Activated CD4-positive, alpha-beta T cell treated with anti-CD3 and anti-CD28 coated beads for 36 hours (primary cell): ENCODE measurements at regions of chr11 and their contacts with region 1.

Region 1: GRCh38 chr11:47847892-47848635 is at the start of gene NUP160:
- DNase-seq: peak; percentile 94
- ATAC-seq: peak; percentile 88
- H3K4me3 Mint-ChIP-seq: peak within 1 kb of the TSS; percentile 90
- H3K27ac Mint-ChIP-seq: peak within 1 kb of the TSS; percentile 99
- H3K4me1 Mint-ChIP-seq: peaks cover 44% of the 10 kb centered on the region
- H3K27me3 Mint-ChIP-seq: no peaks in the 10 kb centered on the region
- total RNA-seq, gene NUP160: 67.1 to 84.5 TPM

Region 2: GRCh38 chr11:46845740-46846509 is 1002.1 kb before region 1 on chr11 and contains the start of gene CKAP5:
- CTCF ChIA-PET with region 1: no interaction called
- POLR2A ChIA-PET with region 1: no interaction called
- intact Hi-C with region 1: loop called in 1 of 2 experiments (anchors 1 kb)
- DNase-seq: peak; percentile 92
- ATAC-seq: peak; percentile 92
- H3K4me3 Mint-ChIP-seq: peak within 1 kb of the TSS; percentile 86
- H3K27ac Mint-ChIP-seq: peak within 1 kb of the TSS; percentile 94
- H3K4me1 Mint-ChIP-seq: peaks cover 30% of the 10 kb centered on the region
- H3K27me3 Mint-ChIP-seq: no peaks in the 10 kb centered on the region
- total RNA-seq, gene CKAP5: 166 to 183 TPM

Region 3: DNA sequence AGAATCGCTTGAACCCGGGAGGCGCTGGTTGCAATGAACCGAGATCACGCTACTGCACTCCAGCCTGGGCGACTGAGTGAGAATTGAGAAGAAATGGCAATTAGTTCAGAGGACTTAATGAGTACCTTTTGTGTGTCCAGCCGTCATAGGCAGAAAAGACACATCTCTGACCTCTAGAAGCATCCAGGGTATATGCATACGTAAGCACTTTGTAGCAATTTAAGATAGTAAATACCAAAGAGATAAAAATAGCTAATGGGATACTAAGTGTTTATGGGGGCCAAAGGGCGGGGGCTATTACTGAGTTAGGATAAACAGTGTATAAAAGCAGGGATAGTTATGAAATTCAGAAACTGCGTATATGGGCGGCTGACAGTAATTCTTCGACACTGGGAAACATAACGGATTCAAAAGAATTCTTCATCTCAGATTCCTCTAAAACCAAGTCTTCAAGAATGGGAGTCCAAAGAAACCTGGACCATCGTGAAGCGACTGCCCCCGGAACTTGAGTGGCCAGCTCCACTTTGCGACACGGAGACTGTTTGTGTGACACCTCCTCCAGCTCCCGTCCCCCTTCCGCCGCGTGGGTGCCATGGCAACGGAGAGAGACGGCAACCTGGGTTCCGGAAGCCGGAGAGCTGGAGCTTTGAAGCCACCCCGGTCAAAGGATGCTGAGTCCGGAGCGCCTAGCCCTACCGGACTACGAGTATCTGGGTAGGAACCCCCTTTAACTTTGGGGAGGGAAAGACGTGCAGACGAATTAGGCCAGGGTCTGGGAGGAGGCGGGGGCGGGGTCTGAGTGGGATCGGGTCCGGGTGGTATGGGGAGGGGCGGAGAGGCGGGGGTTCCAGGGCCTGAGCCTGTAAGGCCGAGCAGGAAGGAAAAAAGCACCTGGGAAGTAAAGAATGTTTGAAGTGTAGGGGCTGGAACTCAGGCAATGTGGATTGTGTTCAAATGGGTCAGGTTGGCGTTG is 911.6 kb before region 1 on chr11 and contains the start of gene CSTPP1:
- CTCF ChIA-PET with region 1: no interaction called
- POLR2A ChIA-PET with region 1: no interaction called
- intact Hi-C with region 1: loop called in 1 of 2 experiments (anchors 5 kb)
- DNase-seq: peak; percentile 97
- ATAC-seq: peak; percentile 96
- H3K4me3 Mint-ChIP-seq: peak within 1 kb of the TSS; percentile 86
- H3K27ac Mint-ChIP-seq: peak within 1 kb of the TSS; percentile 88
- H3K4me1 Mint-ChIP-seq: peaks cover 16% of the 10 kb centered on the region
- H3K27me3 Mint-ChIP-seq: peaks cover 5% of the 10 kb centered on the region
- total RNA-seq, gene CSTPP1: 17.9 to 18.6 TPM

Region 4: DNA sequence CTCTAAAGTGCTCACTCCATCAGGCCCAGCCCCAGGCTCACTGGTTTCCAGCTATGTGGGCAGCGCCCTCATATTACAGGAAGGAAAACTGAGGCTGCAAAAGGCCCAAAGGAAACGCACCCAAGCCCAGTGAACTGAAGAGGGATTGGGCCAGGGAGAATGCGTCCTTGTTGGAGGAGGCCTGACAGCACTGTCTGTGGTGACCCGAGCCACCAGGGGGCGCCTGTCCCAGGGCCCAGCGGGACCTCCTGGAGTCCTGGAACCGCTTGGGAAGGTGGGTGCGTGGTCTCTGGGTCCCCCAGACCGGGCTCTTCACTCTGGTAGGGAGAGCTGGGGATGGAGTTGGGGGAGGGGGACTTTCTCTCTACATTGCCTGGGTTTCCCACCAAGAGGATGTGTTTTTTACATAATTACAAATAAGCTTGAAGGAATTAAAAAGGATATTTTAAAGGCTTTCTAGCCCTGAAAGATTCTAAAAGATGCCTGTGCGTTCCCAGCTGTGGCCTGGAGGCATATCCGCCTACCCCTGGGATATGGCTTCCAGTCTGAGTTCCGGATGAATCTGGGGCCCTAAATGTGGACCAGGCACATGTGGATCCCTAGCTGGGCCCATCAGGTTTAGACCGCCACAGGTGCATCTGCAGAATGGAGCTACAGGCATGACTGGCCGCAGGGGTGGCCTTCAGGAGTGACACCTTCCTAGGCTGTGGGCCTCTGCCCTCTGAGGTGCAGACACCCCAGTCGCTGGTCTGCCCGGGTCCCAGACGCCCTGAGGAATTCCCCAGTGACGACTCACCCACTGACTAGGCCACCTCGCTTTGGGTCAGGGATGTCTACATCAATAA is 474.0 kb before region 1 on chr11:
- CTCF ChIA-PET with region 1: no interaction called
- POLR2A ChIA-PET with region 1: no interaction called
- intact Hi-C with region 1: loop called in 1 of 2 experiments (anchors 1 kb)
- DNase-seq: peak; percentile 92
- ATAC-seq: peak; percentile 89
- H3K4me3 Mint-ChIP-seq: no peak overlapping the region
- H3K27ac Mint-ChIP-seq: peak overlapping the region; percentile 25
- H3K4me1 Mint-ChIP-seq: peaks cover 22% of the 10 kb centered on the region
- H3K27me3 Mint-ChIP-seq: no peaks in the 10 kb centered on the region

Region 5: DNA sequence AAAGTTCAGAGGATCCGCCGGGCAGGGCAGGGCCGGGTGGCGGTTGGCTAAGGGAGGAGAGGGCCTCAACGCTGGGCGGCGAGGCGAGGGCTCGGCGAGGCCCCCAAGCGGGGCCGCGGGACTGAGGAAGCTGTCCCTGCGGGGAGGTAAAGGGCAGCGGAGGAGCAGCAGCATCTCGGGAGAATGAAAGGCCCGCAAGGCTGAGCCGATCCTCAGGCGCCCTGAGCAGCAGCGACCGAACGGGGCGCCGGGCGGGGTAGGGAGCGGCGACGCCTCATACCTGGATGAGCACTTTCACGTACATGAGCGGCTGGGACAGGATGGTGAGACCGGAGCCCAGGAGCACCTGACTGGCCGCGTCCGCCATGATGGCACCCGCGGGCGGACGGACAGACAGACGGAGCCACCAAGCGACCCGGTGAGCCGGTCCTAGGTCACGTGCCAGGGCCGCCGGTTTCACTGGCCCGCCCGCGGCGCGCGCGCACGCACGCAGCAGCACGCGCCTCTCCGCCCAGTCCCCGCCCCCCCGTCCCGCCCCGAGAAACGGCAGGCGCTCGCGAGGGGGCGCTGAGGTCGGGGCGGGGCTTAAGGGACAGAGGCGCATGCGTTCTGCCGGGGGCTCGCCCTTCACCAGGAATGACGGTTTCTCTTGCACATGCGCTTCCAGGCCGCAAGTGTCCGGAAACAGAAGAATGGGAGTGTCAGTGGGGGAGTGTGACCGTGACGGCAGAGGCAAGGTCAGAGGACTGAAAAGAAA is 205.8 kb before region 1 on chr11 and contains the start of gene MTCH2:
- CTCF ChIA-PET with region 1: interaction called, 4 read pairs
- POLR2A ChIA-PET with region 1: no interaction called
- intact Hi-C with region 1: loop called (anchors 1 kb)
- DNase-seq: peak; percentile 98
- ATAC-seq: peak; percentile 94
- H3K4me3 Mint-ChIP-seq: peak within 1 kb of the TSS; percentile 99
- H3K27ac Mint-ChIP-seq: peak within 1 kb of the TSS; percentile 96
- H3K4me1 Mint-ChIP-seq: peaks cover 25% of the 10 kb centered on the region
- H3K27me3 Mint-ChIP-seq: no peaks in the 10 kb centered on the region
- total RNA-seq, gene MTCH2: 94.8 to 138 TPM

Region 6: GRCh38 chr11:47667135-47667534 is 180.9 kb before region 1 on chr11:
- CTCF ChIA-PET with region 1: interaction called, 3 read pairs
- POLR2A ChIA-PET with region 1: no interaction called
- intact Hi-C with region 1: loop called in 1 of 2 experiments (anchors 1 kb)
- DNase-seq: no peak
- ATAC-seq: no peak
- H3K4me3 Mint-ChIP-seq: no peak overlapping the region
- H3K27ac Mint-ChIP-seq: no peak overlapping the region
- H3K4me1 Mint-ChIP-seq: peaks cover 27% of the 10 kb centered on the region
- H3K27me3 Mint-ChIP-seq: no peaks in the 10 kb centered on the region

Region 7: GRCh38 chr11:47797633-47798032 is 50.4 kb before region 1 on chr11:
- CTCF ChIA-PET with region 1: no interaction called
- POLR2A ChIA-PET with region 1: no interaction called
- intact Hi-C with region 1: loop called (anchors 5 kb)
- DNase-seq: peak; percentile 78
- ATAC-seq: peak; percentile 97
- H3K4me3 Mint-ChIP-seq: no peak overlapping the region
- H3K27ac Mint-ChIP-seq: peak overlapping the region; percentile 88
- H3K4me1 Mint-ChIP-seq: peaks cover 13% of the 10 kb centered on the region
- H3K27me3 Mint-ChIP-seq: no peaks in the 10 kb centered on the region

Region 8: GRCh38 chr11:48193876-48194275 is 345.8 kb after region 1 on chr11:
- CTCF ChIA-PET with region 1: no interaction called
- POLR2A ChIA-PET with region 1: no interaction called
- intact Hi-C with region 1: no loop called
- DNase-seq: no peak
- ATAC-seq: no peak
- H3K4me3 Mint-ChIP-seq: no peak overlapping the region
- H3K27ac Mint-ChIP-seq: no peak overlapping the region
- H3K4me1 Mint-ChIP-seq: peaks cover 22% of the 10 kb centered on the region
- H3K27me3 Mint-ChIP-seq: peaks cover 3% of the 10 kb centered on the region

Region 9: GRCh38 chr11:48242501-48242900 is 394.4 kb after region 1 on chr11:
- CTCF ChIA-PET with region 1: no interaction called
- POLR2A ChIA-PET with region 1: no interaction called
- intact Hi-C with region 1: no loop called
- DNase-seq: no peak
- ATAC-seq: no peak
- H3K4me3 Mint-ChIP-seq: no peak overlapping the region
- H3K27ac Mint-ChIP-seq: no peak overlapping the region
- H3K4me1 Mint-ChIP-seq: no peaks in the 10 kb centered on the region
- H3K27me3 Mint-ChIP-seq: peaks cover 12% of the 10 kb centered on the region